Left colon (tissue), 2 donors: ENCODE measurements at regions of chr2 and their contacts with region 1.

Region 1: GRCh38 chr2:64144057-64145013 is at the start of gene PELI1:
- DNase-seq: peak; percentile 98
- ATAC-seq: peak; percentile 93
- total RNA-seq, gene PELI1: 49.2 to 51.8 TPM

Region 2: GRCh38 chr2:64036034-64036705 is 108.2 kb before region 1 on chr2:
- intact Hi-C with region 1: no loop called
- DNase-seq: no peak
- ATAC-seq: no peak

Region 3: GRCh38 chr2:64203858-64204632 is 59.7 kb after region 1 on chr2:
- intact Hi-C with region 1: loop called in 1 of 2 experiments (anchors 10 kb)
- DNase-seq: peak; percentile 31 to 43
- ATAC-seq: peak; percentile 47

Region 4: DNA sequence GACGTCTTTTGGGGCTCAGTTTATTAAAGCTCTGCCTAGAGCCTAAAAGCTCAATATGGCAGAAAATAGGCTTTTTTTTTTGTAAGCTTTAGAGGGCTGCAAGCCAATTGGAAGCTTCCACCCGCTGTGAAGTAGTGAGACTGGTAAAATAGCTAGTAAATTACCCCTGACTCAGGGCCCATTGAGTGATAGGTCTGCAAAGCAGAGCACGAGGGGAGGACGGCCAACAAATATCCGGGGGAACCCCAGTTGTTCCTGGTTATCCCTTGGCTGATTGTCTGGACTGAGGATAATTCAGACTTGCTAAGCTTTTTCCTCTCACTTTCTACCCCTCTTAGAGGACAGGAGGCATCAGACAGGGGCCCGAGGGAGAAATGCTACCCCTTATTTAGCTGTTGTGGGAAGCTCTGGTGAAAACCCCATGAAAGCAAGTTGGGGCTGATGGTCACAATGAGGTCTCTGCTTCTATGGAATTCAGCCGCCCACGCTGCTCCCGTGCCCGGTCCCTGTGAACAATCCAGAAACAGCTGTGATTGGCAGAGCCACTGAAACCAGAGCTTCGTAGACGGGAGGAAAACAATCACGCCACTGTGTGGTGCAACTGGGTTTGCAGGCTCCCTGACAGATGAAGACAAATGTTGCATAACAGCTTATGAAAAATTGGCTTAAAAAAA is 167.8 kb after region 1 on chr2:
- intact Hi-C with region 1: loop called in 1 of 2 experiments (anchors 10 kb)
- DNase-seq: peak; percentile 73 to 75
- ATAC-seq: peak; percentile 99